OCI-LY7 (cell line): ENCODE measurements at regions of chr3 and their contacts with region 1.

Region 1: DNA sequence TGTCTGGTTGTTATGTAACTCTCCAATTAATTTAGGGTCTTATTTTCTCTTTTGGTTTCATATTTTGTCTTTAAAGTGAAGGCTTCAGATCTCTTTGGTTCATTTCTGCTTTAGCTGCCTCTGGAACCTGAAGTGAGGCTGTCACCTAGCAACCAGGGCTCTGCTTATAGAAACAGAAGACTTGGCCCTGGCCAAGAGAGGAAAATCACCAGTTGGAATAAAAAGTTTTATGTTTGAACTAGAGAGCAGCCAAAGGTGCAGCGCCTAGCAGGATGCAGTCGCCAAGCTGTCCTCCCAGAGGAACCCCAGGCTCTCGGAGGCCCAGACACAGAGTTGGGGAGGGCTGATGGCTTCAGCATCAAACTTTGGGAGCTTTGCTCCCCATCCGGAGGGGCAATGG is 41.1 kb downstream of the LYZL4 start:
- DNase-seq: no peak
- H3K4me3 ChIP-seq: no peak overlapping the region
- H3K27ac ChIP-seq: no peak overlapping the region
- H3K4me1 ChIP-seq: no peaks in the 10 kb centered on the region
- CTCF ChIP-seq: no peak

Region 2: GRCh38 chr3:42247576-42248027 is 121.7 kb before region 1 on chr3:
- CTCF ChIA-PET with region 1: no interaction called
- POLR2A ChIA-PET with region 1: no interaction called
- intact Hi-C with region 1: loop called (anchors 10 kb)
- DNase-seq: peak; percentile 76
- H3K4me3 ChIP-seq: no peak overlapping the region
- H3K27ac ChIP-seq: no peak overlapping the region
- H3K4me1 ChIP-seq: no peaks in the 10 kb centered on the region
- CTCF ChIP-seq: peak; percentile 91